A549 (cell line): ENCODE measurements at regions of chr14 and their contacts with region 1.

Region 1: DNA sequence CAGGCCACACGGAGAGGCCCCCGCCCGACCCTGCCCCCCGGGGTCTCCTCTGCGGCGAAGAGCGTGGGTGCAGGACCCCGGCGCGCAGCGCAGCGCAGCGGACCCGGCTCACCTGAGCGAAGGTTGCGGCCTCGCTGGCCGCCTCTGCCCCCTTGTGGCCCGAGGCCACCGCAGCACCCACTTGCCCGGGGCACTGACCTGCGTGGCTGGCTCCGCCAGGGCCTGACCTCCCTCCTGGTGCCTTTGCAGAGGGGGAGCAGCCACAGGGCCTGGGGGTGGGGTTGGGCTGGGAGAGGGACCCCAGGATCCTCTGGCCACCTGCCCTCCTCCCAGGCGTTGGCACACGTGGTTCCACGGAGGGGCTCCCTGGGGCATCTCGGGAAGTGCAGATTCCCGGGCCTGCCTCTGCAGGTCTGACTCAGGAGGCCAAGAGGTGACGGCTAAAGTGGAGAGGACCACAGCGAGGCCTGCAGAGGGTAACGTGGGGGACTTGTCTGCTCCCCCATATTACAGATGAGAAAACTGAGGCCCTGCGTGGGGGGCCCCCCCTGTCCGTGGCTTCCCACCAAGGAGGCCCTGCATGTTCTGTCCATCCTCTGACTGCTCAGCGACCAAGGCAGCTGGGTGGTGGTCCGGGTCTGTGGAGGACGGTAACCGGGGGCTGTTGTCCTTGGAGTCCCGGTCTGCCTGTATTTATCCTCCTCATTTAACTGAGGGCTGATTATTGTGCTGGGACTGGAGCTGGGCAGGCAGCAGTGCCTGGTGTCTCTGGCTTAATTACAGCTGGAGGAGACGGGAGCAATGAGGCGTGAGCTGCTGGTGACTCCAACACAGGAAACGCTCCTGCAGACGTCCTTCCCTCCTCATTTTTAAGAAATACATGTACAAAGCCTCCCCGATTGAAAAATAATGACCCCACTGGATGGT is 67.9 kb upstream of the BEGAIN start:
- DNase-seq: peak; percentile 30 to 90
- ATAC-seq: peak; percentile 86 to 94
- H3K4me3 ChIP-seq: peak overlapping the region; percentile 41
- H3K27ac ChIP-seq: peak overlapping the region; percentile 67 to 86
- H3K4me1 ChIP-seq: peaks cover 3% of the 10 kb centered on the region; the same call in 1 of the 3 replicates
- CTCF ChIP-seq: peak; percentile 89
- EP300 ChIP-seq: no peak
- POLR2A ChIP-seq: no peak
- RAD21 ChIP-seq: peak; percentile 65 to 89

Region 2: GRCh38 chr14:100400115-100400514 is 255.0 kb before region 1 on chr14:
- CTCF ChIA-PET with region 1: interaction called, 12 read pairs
- POLR2A ChIA-PET with region 1: no interaction called
- DNase-seq: no peak
- ATAC-seq: no peak
- H3K4me3 ChIP-seq: no peak overlapping the region
- H3K27ac ChIP-seq: peak overlapping the region in 1 of 2 experiments; percentile 42; a peak in 3 of 6 replicates
- H3K4me1 ChIP-seq: peaks cover 38% of the 10 kb centered on the region
- CTCF ChIP-seq: no peak
- EP300 ChIP-seq: no peak
- POLR2A ChIP-seq: no peak
- RAD21 ChIP-seq: no peak

Region 3: GRCh38 chr14:100524933-100525243 is 130.2 kb before region 1 on chr14:
- CTCF ChIA-PET with region 1: interaction called, 14 read pairs
- POLR2A ChIA-PET with region 1: no interaction called
- DNase-seq: peak; percentile 41 to 46
- ATAC-seq: peak; percentile 58 to 87; a peak in 3 of 6 replicates
- H3K4me3 ChIP-seq: no peak overlapping the region
- H3K27ac ChIP-seq: no peak overlapping the region
- H3K4me1 ChIP-seq: no peaks in the 10 kb centered on the region
- CTCF ChIP-seq: peak; percentile 55
- EP300 ChIP-seq: no peak
- POLR2A ChIP-seq: no peak
- RAD21 ChIP-seq: peak; percentile 72 to 79

Region 4: GRCh38 chr14:100605706-100606686 is 49.1 kb before region 1 on chr14:
- CTCF ChIA-PET with region 1: no interaction called
- POLR2A ChIA-PET with region 1: no interaction called
- DNase-seq: no peak
- ATAC-seq: no peak; a peak in 1 of 6 replicates
- H3K4me3 ChIP-seq: no peak overlapping the region
- H3K27ac ChIP-seq: no peak overlapping the region
- H3K4me1 ChIP-seq: no peaks in the 10 kb centered on the region
- CTCF ChIP-seq: no peak
- EP300 ChIP-seq: no peak
- POLR2A ChIP-seq: no peak
- RAD21 ChIP-seq: no peak

Region 5: DNA sequence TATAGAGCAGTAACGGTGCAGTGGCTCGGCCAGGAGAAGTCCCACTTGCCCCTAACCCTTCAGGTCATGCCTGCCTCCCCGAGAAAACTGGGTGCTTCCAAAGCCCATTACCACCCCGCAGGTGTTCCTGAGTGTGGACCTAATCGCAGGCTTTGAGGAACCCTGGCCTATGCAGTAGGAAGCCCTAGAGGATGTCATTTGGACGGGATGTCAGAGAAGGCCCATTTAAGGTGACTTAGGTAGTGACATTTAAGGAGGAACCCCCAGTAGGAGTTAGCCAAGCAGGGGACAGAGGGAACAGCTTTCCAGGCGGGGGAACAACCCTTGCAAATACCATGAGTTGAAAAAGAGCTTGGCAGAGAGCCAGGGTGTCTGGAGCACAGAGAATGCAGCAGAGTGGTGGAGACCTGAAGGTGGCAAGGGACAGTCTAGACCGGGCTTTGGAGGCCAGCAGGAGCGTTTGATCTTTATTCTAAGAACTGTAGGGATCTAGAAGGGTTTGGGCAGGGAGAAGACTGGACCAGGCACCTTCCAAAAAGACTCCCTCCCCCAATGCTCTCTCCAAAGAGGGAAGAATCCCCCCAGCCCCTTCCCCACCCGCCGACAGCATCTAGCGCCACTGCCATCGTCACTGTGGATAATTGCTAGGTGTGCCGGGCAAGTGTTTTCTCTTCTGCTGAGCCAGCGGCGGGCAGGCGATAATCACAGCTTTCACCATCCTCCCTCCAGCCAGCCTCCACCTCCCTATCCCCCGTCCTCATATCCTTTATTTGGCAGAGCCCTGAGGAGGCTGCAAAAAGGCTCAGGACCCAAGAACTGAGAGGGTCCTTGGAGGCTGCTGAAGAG is 34.6 kb before region 1 on chr14:
- CTCF ChIA-PET with region 1: no interaction called
- POLR2A ChIA-PET with region 1: no interaction called
- DNase-seq: no peak
- ATAC-seq: no peak
- H3K4me3 ChIP-seq: no peak overlapping the region
- H3K27ac ChIP-seq: no peak overlapping the region
- H3K4me1 ChIP-seq: no peaks in the 10 kb centered on the region
- CTCF ChIP-seq: no peak
- EP300 ChIP-seq: no peak
- POLR2A ChIP-seq: no peak
- RAD21 ChIP-seq: no peak